Naive thymus-derived CD4-positive, alpha-beta T cell (primary cell): ENCODE measurements at regions of chr10 and their contacts with region 1.

Region 1: GRCh38 chr10:79195091-79195923 is 126.5 kb downstream of the ZMIZ1 start:
- DNase-seq: peak; percentile 49 to 80 (median 74)
- ATAC-seq: peak; percentile 89
- H3K4me3 ChIP-seq: no peak overlapping the region
- H3K4me3 Mint-ChIP-seq: no peak overlapping the region
- H3K27ac ChIP-seq: no peak overlapping the region
- H3K27ac Mint-ChIP-seq: no peak overlapping the region
- H3K4me1 ChIP-seq: peaks cover 0 to 3% of the 10 kb centered on the region in 2 donors
- H3K4me1 Mint-ChIP-seq: peaks cover 0 to 10% (median 5%) of the 10 kb centered on the region in 7 donors
- H3K27me3 ChIP-seq: no peaks in the 10 kb centered on the region
- H3K27me3 Mint-ChIP-seq: no peaks in the 10 kb centered on the region

Region 2: DNA sequence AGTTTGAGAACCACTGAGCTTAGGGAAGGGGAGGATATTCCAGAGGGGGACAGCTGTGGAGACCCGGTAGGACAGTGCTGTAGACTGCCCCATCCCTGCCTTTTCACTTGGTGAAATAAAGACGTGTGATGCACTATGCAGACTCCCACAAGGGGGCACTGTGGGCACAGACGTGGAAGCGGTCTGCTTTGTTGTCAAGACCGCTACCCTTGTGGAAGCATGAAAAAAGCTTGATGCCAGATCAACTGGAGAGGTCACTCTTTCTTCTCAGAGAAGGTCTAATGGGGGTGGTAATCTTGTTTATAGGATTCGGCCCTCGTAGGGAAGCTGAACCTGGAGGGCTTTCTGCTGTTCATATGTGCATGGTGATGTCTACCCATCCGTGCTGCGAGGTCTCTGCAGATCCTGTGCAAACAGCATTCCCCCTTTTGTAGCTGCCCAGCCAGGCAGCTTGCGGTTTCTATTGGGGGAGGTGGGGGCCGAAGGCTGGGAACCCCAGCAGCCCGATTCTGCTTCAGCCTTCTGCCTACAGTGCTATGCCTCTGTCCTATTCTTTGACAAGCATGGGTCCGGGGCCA is 1147.9 kb before region 1 on chr10:
- CTCF ChIA-PET with region 1: interaction called, 77 read pairs
- POLR2A ChIA-PET with region 1: interaction called, 4 read pairs
- intact Hi-C with region 1: loop called in 1 of 2 experiments (anchors 1 kb)
- DNase-seq: peak; percentile 65 to 80 (median 74)
- ATAC-seq: peak; percentile 92
- H3K4me3 ChIP-seq: no peak overlapping the region
- H3K4me3 Mint-ChIP-seq: peak overlapping the region in 2 of 10 donors; percentile 11 to 27
- H3K27ac ChIP-seq: no peak overlapping the region
- H3K27ac Mint-ChIP-seq: peak overlapping the region in 2 of 9 donors; percentile 4 to 9
- H3K4me1 ChIP-seq: no peaks in the 10 kb centered on the region
- H3K4me1 Mint-ChIP-seq: peaks cover 5 to 26% (median 16%) of the 10 kb centered on the region in 7 donors
- H3K27me3 ChIP-seq: no peaks in the 10 kb centered on the region
- H3K27me3 Mint-ChIP-seq: no peaks in the 10 kb centered on the region

Region 3: GRCh38 chr10:78302989-78303854 is 892.1 kb before region 1 on chr10:
- CTCF ChIA-PET with region 1: no interaction called
- POLR2A ChIA-PET with region 1: no interaction called
- intact Hi-C with region 1: loop called (anchors 1 to 10 kb)
- DNase-seq: peak; percentile 89 to 98 (median 94)
- ATAC-seq: peak; percentile 92
- H3K4me3 ChIP-seq: peak overlapping the region; percentile 92
- H3K4me3 Mint-ChIP-seq: peak overlapping the region; percentile 90 to 99 (median 96)
- H3K27ac ChIP-seq: peak overlapping the region; percentile 87
- H3K27ac Mint-ChIP-seq: peak overlapping the region; percentile 94 to 99 (median 97)
- H3K4me1 ChIP-seq: peaks cover 10 to 11% of the 10 kb centered on the region in 2 donors
- H3K4me1 Mint-ChIP-seq: peaks cover 6 to 34% (median 19%) of the 10 kb centered on the region in 7 donors
- H3K27me3 ChIP-seq: no peaks in the 10 kb centered on the region
- H3K27me3 Mint-ChIP-seq: peaks cover 0 to 23% (median 0%) of the 10 kb centered on the region in 5 donors

Region 4: DNA sequence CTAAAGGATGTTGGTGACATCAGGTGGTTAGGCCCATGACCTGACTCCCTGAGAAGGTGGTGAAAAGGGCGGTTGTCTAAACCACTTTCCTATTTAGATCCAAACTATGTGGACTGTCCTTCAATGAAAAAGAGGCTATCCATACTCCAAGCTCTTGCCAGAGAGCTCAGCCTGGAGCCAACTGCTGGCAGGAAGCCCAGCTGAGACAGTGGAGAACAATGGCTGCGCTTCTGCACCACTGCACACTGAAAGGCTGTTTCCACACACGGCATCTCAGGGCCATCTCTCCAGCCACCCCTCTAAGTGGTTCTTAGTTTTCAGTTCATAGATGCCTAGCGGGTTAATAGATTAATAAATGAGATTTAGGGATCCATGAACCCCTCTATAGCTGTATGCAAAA is 615.3 kb before region 1 on chr10:
- CTCF ChIA-PET with region 1: no interaction called
- POLR2A ChIA-PET with region 1: no interaction called
- intact Hi-C with region 1: loop called in 1 of 2 experiments (anchors 10 kb)
- DNase-seq: no peak
- ATAC-seq: no peak
- H3K4me3 ChIP-seq: no peak overlapping the region
- H3K4me3 Mint-ChIP-seq: no peak overlapping the region
- H3K27ac ChIP-seq: no peak overlapping the region
- H3K27ac Mint-ChIP-seq: no peak overlapping the region
- H3K4me1 ChIP-seq: no peaks in the 10 kb centered on the region
- H3K4me1 Mint-ChIP-seq: peaks cover 0 to 19% (median 2%) of the 10 kb centered on the region in 7 donors
- H3K27me3 ChIP-seq: no peaks in the 10 kb centered on the region
- H3K27me3 Mint-ChIP-seq: no peaks in the 10 kb centered on the region

Region 5: DNA sequence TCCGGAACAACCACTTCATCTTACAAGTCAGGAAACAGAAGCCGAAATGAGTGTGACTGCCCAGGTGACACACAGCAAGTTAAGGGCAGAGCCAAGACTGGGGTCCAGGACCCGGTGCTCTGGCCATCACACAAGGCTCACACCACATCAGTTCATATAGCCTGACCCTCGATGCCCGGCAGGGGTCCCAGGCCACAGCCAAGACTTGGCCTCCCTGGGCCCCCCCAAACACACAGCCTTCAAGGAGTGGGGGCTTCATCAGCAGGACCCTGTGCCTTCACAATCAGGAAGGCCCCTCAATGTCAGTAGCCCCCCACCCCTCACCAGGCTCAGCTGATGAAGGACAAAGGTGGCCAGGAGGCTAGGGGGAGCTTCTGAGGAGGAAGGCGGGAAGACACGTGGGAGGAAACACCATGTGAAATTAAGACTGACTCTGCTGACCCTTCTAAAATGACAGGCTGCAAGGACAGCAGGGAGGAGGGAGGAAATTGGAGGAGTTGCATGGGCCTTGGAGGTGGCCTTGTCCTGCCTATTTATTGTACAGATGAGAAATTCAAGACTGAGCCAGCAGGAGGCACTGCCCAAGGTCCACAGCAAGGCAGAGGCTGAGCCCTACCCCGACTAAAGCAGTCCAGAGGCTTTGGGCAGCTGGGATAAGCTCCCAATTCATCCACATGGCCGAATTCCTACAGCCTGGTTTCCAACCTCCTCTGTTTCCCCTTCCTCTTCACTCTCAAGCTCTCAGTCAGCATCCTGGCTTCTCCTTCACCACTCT is 342.7 kb before region 1 on chr10:
- CTCF ChIA-PET with region 1: interaction called, 14 read pairs
- POLR2A ChIA-PET with region 1: no interaction called
- intact Hi-C with region 1: loop called (anchors 1 kb)
- DNase-seq: peak in 5 of 9 donors; percentile 8 to 29 (median 14)
- ATAC-seq: peak; percentile 57
- H3K4me3 ChIP-seq: no peak overlapping the region
- H3K4me3 Mint-ChIP-seq: no peak overlapping the region
- H3K27ac ChIP-seq: no peak overlapping the region
- H3K27ac Mint-ChIP-seq: no peak overlapping the region
- H3K4me1 ChIP-seq: no peaks in the 10 kb centered on the region
- H3K4me1 Mint-ChIP-seq: no peaks in the 10 kb centered on the region
- H3K27me3 ChIP-seq: no peaks in the 10 kb centered on the region
- H3K27me3 Mint-ChIP-seq: no peaks in the 10 kb centered on the region

Region 6: GRCh38 chr10:78972947-78973900 is 222.1 kb before region 1 on chr10:
- CTCF ChIA-PET with region 1: no interaction called
- POLR2A ChIA-PET with region 1: no interaction called
- intact Hi-C with region 1: loop called in 1 of 2 experiments (anchors 2 kb)
- DNase-seq: peak; percentile 24 to 83 (median 43)
- ATAC-seq: peak; percentile 72
- H3K4me3 ChIP-seq: peak overlapping the region; percentile 13
- H3K4me3 Mint-ChIP-seq: peak overlapping the region; percentile 72 to 89 (median 84)
- H3K27ac ChIP-seq: no peak overlapping the region
- H3K27ac Mint-ChIP-seq: peak overlapping the region in 7 of 9 donors; percentile 2 to 85 (median 66)
- H3K4me1 ChIP-seq: peaks cover 8 to 11% of the 10 kb centered on the region in 2 donors
- H3K4me1 Mint-ChIP-seq: peaks cover 15 to 28% (median 17%) of the 10 kb centered on the region in 7 donors
- H3K27me3 ChIP-seq: no peaks in the 10 kb centered on the region
- H3K27me3 Mint-ChIP-seq: peaks cover 0 to 8% (median 0%) of the 10 kb centered on the region in 5 donors

Region 7: GRCh38 chr10:79116801-79117723 is 78.2 kb before region 1 on chr10:
- CTCF ChIA-PET with region 1: no interaction called
- POLR2A ChIA-PET with region 1: no interaction called
- intact Hi-C with region 1: no loop called
- DNase-seq: no peak
- ATAC-seq: peak; percentile 35
- H3K4me3 ChIP-seq: no peak overlapping the region
- H3K4me3 Mint-ChIP-seq: no peak overlapping the region
- H3K27ac ChIP-seq: no peak overlapping the region
- H3K27ac Mint-ChIP-seq: peak overlapping the region in 2 of 9 donors; percentile 7 to 60
- H3K4me1 ChIP-seq: no peaks in the 10 kb centered on the region
- H3K4me1 Mint-ChIP-seq: peaks cover 16 to 51% (median 32%) of the 10 kb centered on the region in 7 donors
- H3K27me3 ChIP-seq: no peaks in the 10 kb centered on the region
- H3K27me3 Mint-ChIP-seq: no peaks in the 10 kb centered on the region

Region 8: DNA sequence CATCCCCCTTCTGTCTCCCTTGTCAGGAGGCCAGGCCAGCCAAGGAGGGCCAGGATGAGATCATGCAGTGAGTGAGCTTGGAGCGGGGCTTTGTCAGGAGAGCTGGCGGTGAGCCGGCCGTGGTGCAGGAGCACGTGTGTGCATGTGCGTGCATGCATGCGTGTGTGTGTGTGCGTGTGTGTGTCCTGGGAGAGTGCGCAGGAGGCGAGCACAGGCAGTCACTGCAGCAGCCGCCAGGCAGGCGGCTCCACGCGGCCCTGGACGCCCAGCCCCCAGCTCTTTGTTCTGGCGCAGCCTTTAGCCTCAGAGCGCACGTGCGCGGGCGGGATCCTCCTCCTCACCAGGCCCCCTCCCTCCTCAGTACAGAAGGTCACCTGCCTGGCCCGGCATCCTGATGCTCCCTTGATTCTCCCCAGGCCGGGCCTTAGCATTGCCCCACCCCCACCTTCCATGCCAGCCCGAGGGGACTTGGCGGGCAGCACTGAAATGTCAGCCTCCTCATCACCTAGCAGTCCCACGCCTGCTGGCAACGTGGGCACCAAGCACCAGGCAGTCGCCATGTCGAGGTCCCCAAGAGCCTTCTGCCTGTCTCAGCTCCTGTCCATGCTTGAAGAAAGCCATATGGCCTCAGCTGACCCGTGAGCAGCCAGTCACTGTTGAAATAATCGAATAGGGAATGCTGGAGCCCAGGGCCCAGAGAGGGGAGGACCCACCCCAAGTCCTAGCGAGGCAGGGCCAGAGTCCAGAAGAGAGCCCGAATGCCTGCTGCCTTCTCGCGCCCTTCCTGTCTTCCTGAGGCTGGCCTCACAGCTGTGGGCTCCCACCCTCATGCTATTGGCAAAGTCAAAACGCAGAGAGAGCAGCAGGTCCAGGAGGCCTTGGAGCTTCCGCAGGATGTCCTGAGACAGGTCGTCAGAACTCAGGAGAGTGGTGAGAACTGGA is 26.1 kb after region 1 on chr10:
- CTCF ChIA-PET with region 1: no interaction called
- POLR2A ChIA-PET with region 1: no interaction called
- intact Hi-C with region 1: no loop called
- DNase-seq: no peak
- ATAC-seq: peak; percentile 17
- H3K4me3 ChIP-seq: no peak overlapping the region
- H3K4me3 Mint-ChIP-seq: no peak overlapping the region
- H3K27ac ChIP-seq: no peak overlapping the region
- H3K27ac Mint-ChIP-seq: no peak overlapping the region
- H3K4me1 ChIP-seq: no peaks in the 10 kb centered on the region
- H3K4me1 Mint-ChIP-seq: no peaks in the 10 kb centered on the region
- H3K27me3 ChIP-seq: no peaks in the 10 kb centered on the region
- H3K27me3 Mint-ChIP-seq: no peaks in the 10 kb centered on the region